Gastrocnemius medialis (tissue), 4 donors: ENCODE measurements at regions of chr16 and their contacts with region 1.

Region 1: GRCh38 chr16:20806168-20807050 is at the starts of genes ERI2 and REXO5:
- DNase-seq: peak; percentile 84 to 87
- ATAC-seq: peak; percentile 95 to 97
- H3K4me3 ChIP-seq: peak within 1 kb of the TSS; percentile 78 to 94 (median 86)
- H3K27ac ChIP-seq: peak within 1 kb of the TSS; percentile 87 to 92 (median 88)
- H3K4me1 ChIP-seq: peaks cover 9 to 17% of the 10 kb centered on the region in 2 donors
- H3K27me3 ChIP-seq: no peaks in the 10 kb centered on the region
- CTCF ChIP-seq: peak in 3 of 5 experiments; percentile 12 to 51 (median 41)
- POLR2A ChIP-seq: peak; percentile 44 to 45
- total RNA-seq, gene ERI2: 3.0 to 30.5 (median 9.8) TPM
- total RNA-seq, gene REXO5: 0.52 to 3.1 (median 1.6) TPM

Region 2: DNA sequence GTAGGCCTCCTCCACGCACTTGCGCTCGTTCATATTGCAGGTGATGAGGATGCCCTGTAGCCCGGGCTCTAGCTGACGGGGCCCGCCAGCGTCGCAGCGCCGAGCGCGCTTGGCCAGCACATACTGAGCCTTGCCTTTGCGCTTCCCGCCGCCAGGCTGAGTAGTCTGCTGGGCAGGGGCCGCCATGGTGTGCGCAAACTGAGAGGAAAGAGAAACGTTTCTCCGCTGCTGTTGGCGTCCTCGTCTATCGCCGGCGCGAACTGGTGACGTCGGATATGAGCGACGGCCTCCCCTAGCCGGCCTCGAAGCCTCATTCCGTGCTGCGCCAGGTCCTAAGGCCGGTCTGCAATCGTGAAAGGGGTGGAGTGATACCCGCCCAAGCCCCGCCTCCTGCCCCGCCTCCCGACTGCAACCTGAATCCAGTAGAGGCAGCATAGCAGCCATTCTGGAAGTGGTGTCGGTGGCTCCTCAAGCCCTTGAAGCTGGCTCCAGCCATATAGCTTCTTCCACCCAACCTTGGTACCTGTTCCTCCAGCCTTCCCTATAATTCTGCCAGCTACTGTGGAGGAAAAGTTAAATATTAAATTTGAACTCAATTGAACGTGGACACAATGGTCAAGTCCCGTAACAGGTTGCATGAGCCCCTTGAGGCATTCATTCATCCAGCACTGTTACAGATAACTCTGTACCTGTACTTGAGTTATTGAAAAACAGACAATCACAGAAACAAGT is 64.7 kb before region 1 on chr16 and contains the start of gene THUMPD1:
- in situ Hi-C with region 1: no loop called
- intact Hi-C with region 1: loop called (anchors 1 kb)
- DNase-seq: peak; percentile 91 to 97
- ATAC-seq: peak; percentile 96
- H3K4me3 ChIP-seq: peak within 1 kb of the TSS; percentile 97 to 100 (median 99)
- H3K27ac ChIP-seq: peak within 1 kb of the TSS; percentile 98 to 100 (median 98)
- H3K4me1 ChIP-seq: peaks cover 12 to 16% of the 10 kb centered on the region in 2 donors
- H3K27me3 ChIP-seq: no peaks in the 10 kb centered on the region
- CTCF ChIP-seq: peak in 3 of 5 experiments; percentile 19 to 28 (median 23)
- POLR2A ChIP-seq: peak; percentile 70 to 86
- total RNA-seq, gene THUMPD1: 42.0 to 61.7 (median 53.8) TPM